Psoas muscle (tissue), 8 donors: ENCODE measurements at regions of chr1 and their contacts with region 1.

Region 1: GRCh38 chr1:43577655-43578421 is 47.2 kb downstream of the PTPRF start:
- DNase-seq: no peak
- ATAC-seq: no peak
- H3K4me3 ChIP-seq: no peak overlapping the region
- H3K27ac ChIP-seq: no peak overlapping the region
- H3K4me1 ChIP-seq: no peaks in the 10 kb centered on the region
- H3K27me3 ChIP-seq: no peaks in the 10 kb centered on the region
- CTCF ChIP-seq: no peak

Region 2: DNA sequence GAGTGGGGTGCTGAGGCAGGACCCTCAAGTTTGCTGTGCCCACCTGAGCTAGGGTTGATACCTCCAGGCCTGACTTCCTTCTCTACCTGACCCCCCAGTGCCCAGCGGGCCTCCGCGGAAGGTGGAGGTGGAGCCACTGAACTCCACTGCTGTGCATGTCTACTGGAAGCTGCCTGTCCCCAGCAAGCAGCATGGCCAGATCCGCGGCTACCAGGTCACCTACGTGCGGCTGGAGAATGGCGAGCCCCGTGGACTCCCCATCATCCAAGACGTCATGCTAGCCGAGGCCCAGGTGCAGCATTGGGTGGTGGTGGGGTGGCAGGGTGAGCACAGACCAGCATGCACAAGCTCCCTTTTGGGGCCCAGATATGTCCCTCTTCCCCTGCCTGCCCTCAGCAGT is 20.8 kb after region 1 on chr1:
- intact Hi-C with region 1: loop called in 1 of 2 experiments (anchors 1 kb)
- DNase-seq: no peak
- ATAC-seq: no peak
- H3K4me3 ChIP-seq: no peak overlapping the region
- H3K27ac ChIP-seq: no peak overlapping the region
- H3K4me1 ChIP-seq: no peaks in the 10 kb centered on the region
- H3K27me3 ChIP-seq: no peaks in the 10 kb centered on the region
- CTCF ChIP-seq: no peak